Ascending aorta (tissue), 2 donors: ENCODE measurements at regions of chr16 and their contacts with region 1.

Region 1: GRCh38 chr16:72938795-72939164 is 109.1 kb downstream of the ZFHX3 start:
- DNase-seq: peak; percentile 83 to 94
- H3K4me3 ChIP-seq: peak overlapping the region in 1 of 2 donors; percentile 43
- H3K27ac ChIP-seq: peak overlapping the region; percentile 90 to 91
- H3K4me1 ChIP-seq: peaks cover 32 to 36% of the 10 kb centered on the region in 2 donors
- H3K27me3 ChIP-seq: no peaks in the 10 kb centered on the region
- CTCF ChIP-seq: no peak

Region 2: DNA sequence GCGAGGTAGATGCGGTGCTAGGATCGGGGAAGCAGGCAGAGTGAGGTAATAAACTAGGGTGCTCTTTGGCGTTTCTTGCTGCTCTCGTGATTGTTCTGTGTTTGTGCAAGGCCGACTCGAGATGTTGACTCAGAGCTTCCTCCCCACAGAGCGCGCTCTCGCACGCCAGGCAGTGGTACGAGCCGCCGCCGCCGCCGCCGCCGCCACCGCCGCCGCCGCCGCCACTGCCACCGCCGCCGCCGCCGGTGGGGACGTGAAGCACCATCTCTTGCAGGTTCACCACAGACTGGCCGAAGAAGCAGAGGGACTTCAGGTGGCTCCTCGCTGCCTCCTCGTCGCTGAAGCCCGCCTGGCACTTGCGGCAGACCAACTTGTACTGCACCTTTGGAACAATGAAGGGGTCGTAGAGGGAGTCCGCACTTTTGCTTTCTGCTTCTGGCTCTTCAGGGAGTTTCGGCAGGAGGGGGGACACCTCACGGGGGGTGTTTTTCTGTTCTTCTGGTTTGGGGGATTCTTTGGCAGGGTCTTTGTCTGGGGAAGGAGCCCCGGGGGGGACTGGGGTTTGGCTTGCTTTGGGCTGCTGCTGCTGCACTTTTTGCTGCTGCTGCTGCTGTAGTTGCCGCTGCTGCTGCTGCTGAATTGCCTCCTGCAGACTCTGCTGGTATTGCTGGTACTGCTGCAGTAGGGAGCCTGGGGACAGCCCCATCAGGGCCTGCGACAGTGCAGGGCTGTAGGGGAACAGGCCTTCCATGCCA is 151.1 kb before region 1 on chr16:
- intact Hi-C with region 1: loop called (anchors 5 kb)
- DNase-seq: peak; percentile 65 to 90
- H3K4me3 ChIP-seq: peak overlapping the region; percentile 56 to 71
- H3K27ac ChIP-seq: peak overlapping the region; percentile 87
- H3K4me1 ChIP-seq: peaks cover 5 to 12% of the 10 kb centered on the region in 2 donors
- H3K27me3 ChIP-seq: no peaks in the 10 kb centered on the region
- CTCF ChIP-seq: no peak

Region 3: GRCh38 chr16:72832621-72833248 is 106.0 kb before region 1 on chr16:
- intact Hi-C with region 1: loop called (anchors 5 kb)
- DNase-seq: peak; percentile 26 to 89
- H3K4me3 ChIP-seq: no peak overlapping the region
- H3K27ac ChIP-seq: peak overlapping the region; percentile 63 to 66
- H3K4me1 ChIP-seq: peaks cover 6 to 16% of the 10 kb centered on the region in 2 donors
- H3K27me3 ChIP-seq: no peaks in the 10 kb centered on the region
- CTCF ChIP-seq: peak; percentile 83 to 99 (median 99)

Region 4: GRCh38 chr16:72844225-72844920 is 94.4 kb before region 1 on chr16:
- intact Hi-C with region 1: no loop called
- DNase-seq: no peak
- H3K4me3 ChIP-seq: no peak overlapping the region
- H3K27ac ChIP-seq: peak overlapping the region; percentile 96 to 98
- H3K4me1 ChIP-seq: peaks cover 18 to 50% of the 10 kb centered on the region in 2 donors
- H3K27me3 ChIP-seq: no peaks in the 10 kb centered on the region
- CTCF ChIP-seq: no peak

Region 5: GRCh38 chr16:72989579-72990551 is 51.1 kb after region 1 on chr16:
- intact Hi-C with region 1: loop called (anchors 2 kb)
- DNase-seq: peak; percentile 74 to 94
- H3K4me3 ChIP-seq: peak overlapping the region; percentile 43 to 55
- H3K27ac ChIP-seq: peak overlapping the region; percentile 92
- H3K4me1 ChIP-seq: peaks cover 24 to 71% of the 10 kb centered on the region in 2 donors
- H3K27me3 ChIP-seq: no peaks in the 10 kb centered on the region
- CTCF ChIP-seq: no peak

Region 6: GRCh38 chr16:73047518-73048291 is 108.9 kb after region 1 on chr16 and contains the start of gene ZFHX3:
- intact Hi-C with region 1: loop called (anchors 2 kb)
- DNase-seq: peak in 1 of 2 donors; percentile 91
- H3K4me3 ChIP-seq: peak within 1 kb of the TSS; percentile 88 to 89
- H3K27ac ChIP-seq: peak within 1 kb of the TSS; percentile 98 to 99
- H3K4me1 ChIP-seq: peaks cover 11 to 71% of the 10 kb centered on the region in 2 donors
- H3K27me3 ChIP-seq: no peaks in the 10 kb centered on the region
- CTCF ChIP-seq: peak in 1 of 3 experiments; percentile 28
- total RNA-seq, gene ZFHX3: 34.8 TPM

Region 7: DNA sequence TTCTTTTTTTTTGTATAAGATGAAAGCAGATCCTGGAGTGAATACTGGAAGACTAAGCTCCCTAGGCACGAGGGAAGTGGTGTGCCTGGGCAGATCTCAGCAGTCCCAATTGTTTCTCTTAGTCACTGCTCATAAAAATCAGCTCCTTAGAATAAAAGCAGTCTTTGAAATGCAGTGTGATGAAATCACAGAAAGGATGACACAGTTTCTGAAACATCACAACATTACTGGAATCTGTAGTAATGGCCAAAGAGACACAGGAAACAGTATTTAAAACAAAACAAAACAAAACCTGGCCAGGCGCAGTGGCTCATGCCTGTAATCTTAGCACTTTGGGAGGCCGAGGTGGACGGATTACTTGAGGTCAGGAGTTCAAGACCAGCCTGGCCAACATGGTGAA is 143.8 kb after region 1 on chr16:
- intact Hi-C with region 1: no loop called
- DNase-seq: peak in 1 of 2 donors; percentile 71
- H3K4me3 ChIP-seq: no peak overlapping the region
- H3K27ac ChIP-seq: peak overlapping the region; percentile 65 to 75
- H3K4me1 ChIP-seq: peaks cover 0 to 2% of the 10 kb centered on the region in 2 donors
- H3K27me3 ChIP-seq: no peaks in the 10 kb centered on the region
- CTCF ChIP-seq: no peak

Region 8: GRCh38 chr16:73172241-73172972 is 233.6 kb after region 1 on chr16:
- intact Hi-C with region 1: loop called (anchors 5 kb)
- DNase-seq: peak in 1 of 2 donors; percentile 86
- H3K4me3 ChIP-seq: peak overlapping the region in 1 of 2 donors; percentile 23
- H3K27ac ChIP-seq: peak overlapping the region; percentile 91 to 94
- H3K4me1 ChIP-seq: peaks cover 3 to 21% of the 10 kb centered on the region in 2 donors
- H3K27me3 ChIP-seq: no peaks in the 10 kb centered on the region
- CTCF ChIP-seq: peak in 1 of 3 experiments; percentile 29